CD8-positive, alpha-beta T cell (primary cell): ENCODE measurements at regions of chr10 and their contacts with region 1.

Region 1: GRCh38 chr10:73879296-73880173 is 5.2 kb upstream of the CAMK2G start:
- DNase-seq: peak; percentile 86 to 98 (median 95)
- ATAC-seq: peak; percentile 85
- H3K4me3 ChIP-seq: no peak overlapping the region
- H3K4me3 Mint-ChIP-seq: no peak overlapping the region
- H3K27ac ChIP-seq: peak overlapping the region; percentile 19 to 29
- H3K27ac Mint-ChIP-seq: peak overlapping the region; percentile 90
- H3K4me1 ChIP-seq: peaks cover 31% of the 10 kb centered on the region
- H3K4me1 Mint-ChIP-seq: peaks cover 42% of the 10 kb centered on the region
- H3K27me3 ChIP-seq: no peaks in the 10 kb centered on the region
- H3K27me3 Mint-ChIP-seq: no peaks in the 10 kb centered on the region
- CTCF ChIP-seq: peak; percentile 85

Region 2: DNA sequence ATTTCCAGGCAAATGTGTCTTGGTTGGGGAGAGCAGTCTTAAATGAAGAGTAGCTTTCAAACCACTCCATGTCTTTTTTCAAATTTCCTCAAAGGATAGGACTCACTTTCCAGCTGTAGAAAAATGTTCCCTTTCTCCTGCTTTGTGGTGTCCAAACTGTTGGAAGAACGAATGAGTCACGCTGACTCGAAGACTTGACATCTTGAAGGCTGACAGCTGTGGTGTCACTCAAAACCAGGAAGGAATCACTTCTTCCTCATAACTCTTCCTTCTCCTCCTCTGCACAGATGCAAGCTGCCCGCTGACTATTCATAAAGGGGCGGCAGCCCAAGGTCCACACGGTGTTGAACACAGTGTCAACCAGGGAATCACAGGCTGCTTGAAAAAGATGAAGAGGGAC is 944.2 kb before region 1 on chr10:
- CTCF ChIA-PET with region 1: no interaction called
- POLR2A ChIA-PET with region 1: no interaction called
- intact Hi-C with region 1: no loop called
- DNase-seq: no peak
- ATAC-seq: no peak
- H3K4me3 ChIP-seq: no peak overlapping the region
- H3K4me3 Mint-ChIP-seq: no peak overlapping the region
- H3K27ac ChIP-seq: no peak overlapping the region
- H3K27ac Mint-ChIP-seq: no peak overlapping the region
- H3K4me1 ChIP-seq: no peaks in the 10 kb centered on the region
- H3K4me1 Mint-ChIP-seq: no peaks in the 10 kb centered on the region
- H3K27me3 ChIP-seq: no peaks in the 10 kb centered on the region
- H3K27me3 Mint-ChIP-seq: peaks cover 11% of the 10 kb centered on the region
- CTCF ChIP-seq: no peak

Region 3: GRCh38 chr10:73765066-73765465 is 114.5 kb before region 1 on chr10:
- CTCF ChIA-PET with region 1: interaction called, 11 read pairs
- POLR2A ChIA-PET with region 1: interaction called, 3 read pairs
- intact Hi-C with region 1: loop called in 1 of 2 experiments (anchors 5 kb)
- DNase-seq: peak in 1 of 9 experiments; percentile 12
- ATAC-seq: no peak
- H3K4me3 ChIP-seq: no peak overlapping the region
- H3K4me3 Mint-ChIP-seq: no peak overlapping the region
- H3K27ac ChIP-seq: no peak overlapping the region
- H3K27ac Mint-ChIP-seq: no peak overlapping the region
- H3K4me1 ChIP-seq: peaks cover 18% of the 10 kb centered on the region
- H3K4me1 Mint-ChIP-seq: peaks cover 48% of the 10 kb centered on the region
- H3K27me3 ChIP-seq: no peaks in the 10 kb centered on the region
- H3K27me3 Mint-ChIP-seq: no peaks in the 10 kb centered on the region
- CTCF ChIP-seq: no peak

Region 4: GRCh38 chr10:73827346-73828089 is 52.0 kb before region 1 on chr10:
- CTCF ChIA-PET with region 1: interaction called, 11 read pairs
- POLR2A ChIA-PET with region 1: no interaction called
- intact Hi-C with region 1: no loop called
- DNase-seq: no peak
- ATAC-seq: no peak
- H3K4me3 ChIP-seq: no peak overlapping the region
- H3K4me3 Mint-ChIP-seq: no peak overlapping the region
- H3K27ac ChIP-seq: no peak overlapping the region
- H3K27ac Mint-ChIP-seq: no peak overlapping the region
- H3K4me1 ChIP-seq: no peaks in the 10 kb centered on the region
- H3K4me1 Mint-ChIP-seq: no peaks in the 10 kb centered on the region
- H3K27me3 ChIP-seq: no peaks in the 10 kb centered on the region
- H3K27me3 Mint-ChIP-seq: no peaks in the 10 kb centered on the region
- CTCF ChIP-seq: no peak

Region 5: DNA sequence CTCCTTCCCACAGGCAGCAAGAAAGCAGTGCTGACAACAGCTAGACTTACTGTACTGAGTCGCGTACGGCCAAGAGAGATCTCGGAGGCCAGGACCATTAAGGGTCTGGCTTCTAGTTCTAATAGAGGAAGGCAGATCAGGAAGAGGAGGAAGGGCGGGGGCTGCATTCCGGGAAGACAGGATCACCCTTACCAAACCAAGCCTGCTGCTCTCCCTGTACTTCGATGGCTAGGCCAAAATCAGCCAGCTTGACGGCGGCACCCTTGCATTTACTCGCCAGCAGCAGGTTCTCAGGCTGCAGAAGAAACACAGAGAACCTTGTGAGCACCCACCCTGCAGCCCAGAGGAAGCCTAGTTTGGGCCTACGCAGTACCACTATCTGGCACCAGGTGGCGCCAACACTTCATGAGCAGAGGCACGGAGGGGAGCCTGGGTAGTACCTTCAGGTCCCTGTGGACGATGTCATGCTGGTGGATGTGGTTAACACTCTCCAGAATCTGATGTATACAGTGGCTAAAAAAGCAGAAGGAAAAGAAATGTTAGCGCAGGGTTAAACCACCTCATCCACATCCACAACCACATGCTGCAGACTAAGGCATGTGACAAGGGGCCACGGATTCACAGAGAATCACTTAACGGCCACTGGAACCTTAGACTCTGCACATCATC is 30.6 kb before region 1 on chr10:
- CTCF ChIA-PET with region 1: interaction called, 528 read pairs
- POLR2A ChIA-PET with region 1: interaction called, 27 read pairs
- intact Hi-C with region 1: loop called (anchors 1 kb)
- DNase-seq: peak; percentile 84 to 97 (median 92)
- ATAC-seq: peak; percentile 99
- H3K4me3 ChIP-seq: no peak overlapping the region
- H3K4me3 Mint-ChIP-seq: no peak overlapping the region
- H3K27ac ChIP-seq: peak overlapping the region; percentile 20 to 23
- H3K27ac Mint-ChIP-seq: peak overlapping the region; percentile 90
- H3K4me1 ChIP-seq: peaks cover 11% of the 10 kb centered on the region
- H3K4me1 Mint-ChIP-seq: peaks cover 13% of the 10 kb centered on the region
- H3K27me3 ChIP-seq: no peaks in the 10 kb centered on the region
- H3K27me3 Mint-ChIP-seq: no peaks in the 10 kb centered on the region
- CTCF ChIP-seq: peak; percentile 96

Region 6: DNA sequence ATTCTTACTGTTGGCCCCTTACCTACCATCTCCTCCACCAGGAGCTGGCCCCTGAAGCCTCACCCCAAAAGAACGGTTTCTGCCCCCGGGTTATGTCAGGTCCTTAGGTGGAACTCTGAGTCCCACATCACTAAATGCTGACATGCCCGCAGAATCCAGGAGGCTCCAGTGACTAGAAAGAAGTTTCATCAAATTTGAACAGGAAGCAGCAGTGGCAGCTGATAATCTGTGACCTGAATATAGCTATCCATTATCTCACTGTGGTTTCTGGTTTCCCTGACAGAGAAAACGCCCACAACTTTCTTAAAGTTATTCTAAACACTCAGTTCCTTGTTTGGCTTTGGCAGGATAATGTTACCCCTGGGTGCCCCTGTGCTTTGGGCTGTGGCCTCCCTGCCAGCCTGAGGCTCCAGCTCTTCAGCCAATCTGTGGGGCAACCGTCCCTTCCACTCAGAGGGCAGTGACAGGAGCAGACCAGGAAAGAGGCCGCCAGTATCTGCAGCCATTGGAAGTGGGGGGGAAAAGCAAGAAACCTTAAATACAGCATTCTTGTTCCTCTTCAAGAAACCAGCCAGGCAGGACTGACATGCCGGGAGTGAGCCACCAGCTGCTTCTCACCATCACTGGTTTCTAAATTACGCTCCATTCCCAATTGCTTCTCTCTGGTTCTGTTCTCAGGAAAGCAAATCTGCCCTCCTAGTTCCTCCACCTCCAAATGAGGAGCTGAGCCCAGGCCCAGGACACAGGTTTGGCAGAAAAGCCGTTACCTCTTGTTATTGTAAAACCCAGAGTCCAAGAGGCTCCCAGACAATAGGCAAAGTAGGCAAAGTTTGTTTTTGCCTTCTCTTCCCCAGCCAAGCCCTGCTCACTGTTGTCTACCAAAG is 77.2 kb after region 1 on chr10:
- CTCF ChIA-PET with region 1: interaction called, 15 read pairs
- POLR2A ChIA-PET with region 1: no interaction called
- intact Hi-C with region 1: no loop called
- DNase-seq: peak in 6 of 9 experiments; percentile 12 to 77 (median 36)
- ATAC-seq: peak; percentile 80
- H3K4me3 ChIP-seq: peak overlapping the region; percentile 3 to 26
- H3K4me3 Mint-ChIP-seq: peak overlapping the region; percentile 64
- H3K27ac ChIP-seq: peak overlapping the region in 1 of 2 experiments; percentile 72
- H3K27ac Mint-ChIP-seq: peak overlapping the region; percentile 86
- H3K4me1 ChIP-seq: peaks cover 27% of the 10 kb centered on the region
- H3K4me1 Mint-ChIP-seq: peaks cover 43% of the 10 kb centered on the region
- H3K27me3 ChIP-seq: no peaks in the 10 kb centered on the region
- H3K27me3 Mint-ChIP-seq: no peaks in the 10 kb centered on the region
- CTCF ChIP-seq: no peak

Region 7: DNA sequence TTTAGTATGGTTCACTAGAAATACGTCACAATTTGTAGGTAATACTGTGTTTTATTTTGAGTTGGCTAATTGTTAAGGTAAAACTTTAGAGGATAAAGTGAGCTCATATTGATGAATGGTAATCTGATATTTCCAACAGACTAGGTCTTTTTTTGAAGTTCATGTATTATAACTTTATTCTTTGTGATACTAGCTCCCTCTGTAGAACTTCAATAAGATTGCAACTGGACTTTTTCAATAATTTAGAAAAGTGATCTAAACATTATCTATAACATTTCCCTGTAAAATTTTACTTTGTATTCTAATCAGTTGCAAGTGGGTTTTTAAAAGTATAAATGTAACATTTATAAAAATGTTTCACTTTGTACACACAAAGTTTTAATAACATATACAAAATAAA is 355.0 kb after region 1 on chr10:
- CTCF ChIA-PET with region 1: no interaction called
- POLR2A ChIA-PET with region 1: no interaction called
- intact Hi-C with region 1: loop called (anchors 10 kb)
- DNase-seq: peak in 1 of 9 experiments; percentile 29
- ATAC-seq: no peak
- H3K4me3 ChIP-seq: no peak overlapping the region
- H3K4me3 Mint-ChIP-seq: no peak overlapping the region
- H3K27ac ChIP-seq: no peak overlapping the region
- H3K27ac Mint-ChIP-seq: no peak overlapping the region
- H3K4me1 ChIP-seq: no peaks in the 10 kb centered on the region
- H3K4me1 Mint-ChIP-seq: peaks cover 8% of the 10 kb centered on the region
- H3K27me3 ChIP-seq: no peaks in the 10 kb centered on the region
- H3K27me3 Mint-ChIP-seq: no peaks in the 10 kb centered on the region
- CTCF ChIP-seq: peak; percentile 73

Region 8: DNA sequence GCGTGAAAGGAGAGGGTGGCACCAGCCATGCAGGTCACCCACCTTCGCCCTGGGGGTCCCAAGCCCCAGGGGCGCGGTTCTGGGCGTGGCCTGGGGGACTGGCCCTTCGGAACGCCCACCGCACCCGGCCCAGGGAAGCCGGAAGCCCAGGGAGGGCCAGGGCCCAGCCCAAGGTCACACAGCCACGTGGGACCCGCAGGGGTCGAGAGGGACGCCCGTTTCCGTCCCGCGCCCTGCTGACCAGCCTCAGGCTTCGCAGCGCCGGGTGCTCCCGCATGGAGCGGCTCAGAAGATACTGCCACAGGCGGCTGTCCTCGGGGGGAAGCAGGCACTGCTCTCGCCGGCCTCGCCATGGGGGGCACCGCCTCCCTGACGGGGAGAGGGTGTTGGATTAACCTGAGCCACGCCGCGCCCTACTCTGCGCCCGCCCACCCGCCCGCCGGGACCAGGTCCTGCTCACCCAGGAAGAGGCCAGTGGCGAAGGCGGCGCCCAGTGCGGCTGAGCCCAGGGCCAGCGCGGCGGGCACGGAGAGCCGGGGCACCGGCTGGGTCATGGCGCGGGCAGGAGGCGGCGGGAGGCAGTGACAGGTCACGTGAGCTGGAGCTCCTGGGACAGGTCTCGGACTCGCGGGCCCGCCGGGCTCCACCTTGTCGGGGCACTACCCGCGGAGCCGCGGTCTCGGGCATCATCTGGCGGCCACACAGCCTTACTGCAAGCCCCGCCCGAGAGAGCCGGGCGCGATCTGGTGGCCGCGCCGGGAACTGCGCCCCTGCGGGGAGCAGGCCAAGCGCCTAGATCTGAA is 1356.0 kb after region 1 on chr10 and contains the start of gene COMTD1:
- CTCF ChIA-PET with region 1: no interaction called
- POLR2A ChIA-PET with region 1: no interaction called
- intact Hi-C with region 1: loop called (anchors 2 to 10 kb)
- DNase-seq: peak; percentile 90 to 96 (median 92)
- ATAC-seq: peak; percentile 66
- H3K4me3 ChIP-seq: peak within 1 kb of the TSS; percentile 68 to 73
- H3K4me3 Mint-ChIP-seq: peak within 1 kb of the TSS; percentile 82
- H3K27ac ChIP-seq: peak within 1 kb of the TSS; percentile 52 to 66
- H3K27ac Mint-ChIP-seq: peak within 1 kb of the TSS; percentile 80
- H3K4me1 ChIP-seq: peaks cover 14% of the 10 kb centered on the region
- H3K4me1 Mint-ChIP-seq: peaks cover 20% of the 10 kb centered on the region
- H3K27me3 ChIP-seq: no peaks in the 10 kb centered on the region
- H3K27me3 Mint-ChIP-seq: no peaks in the 10 kb centered on the region
- CTCF ChIP-seq: peak; percentile 100
- total RNA-seq, gene COMTD1: 7.6 to 7.9 TPM